Activated B cell treated with CpG ODN at 0.5 μM for 24 hours (primary cell): ENCODE measurements at regions of chr7 and their contacts with region 1.

Region 1: DNA sequence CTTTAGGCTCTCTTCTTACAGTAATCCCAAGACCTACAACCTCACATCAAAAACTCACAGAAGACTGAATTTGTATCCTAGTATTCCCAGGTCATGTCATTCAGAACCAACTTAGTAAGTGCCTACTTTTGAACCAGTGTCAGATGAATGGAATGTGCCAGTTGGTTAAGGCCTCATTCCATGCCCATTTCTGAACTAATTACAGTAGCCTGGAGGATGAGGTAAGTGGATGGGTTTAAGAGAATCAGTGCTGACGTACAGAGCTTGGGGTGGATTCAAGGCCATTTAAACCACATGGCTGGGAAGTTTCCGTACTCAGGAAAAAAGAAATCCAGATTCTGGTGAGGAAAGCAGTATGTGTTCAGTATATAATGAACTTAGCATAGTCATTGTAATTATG is 21.9 kb upstream of the FOXP2 start:
- DNase-seq: no peak
- ATAC-seq: no peak
- H3K4me3 Mint-ChIP-seq: no peak overlapping the region
- H3K27ac Mint-ChIP-seq: no peak overlapping the region
- H3K4me1 Mint-ChIP-seq: no peaks in the 10 kb centered on the region
- H3K27me3 Mint-ChIP-seq: no peaks in the 10 kb centered on the region
- CTCF ChIP-seq: no peak

Region 2: DNA sequence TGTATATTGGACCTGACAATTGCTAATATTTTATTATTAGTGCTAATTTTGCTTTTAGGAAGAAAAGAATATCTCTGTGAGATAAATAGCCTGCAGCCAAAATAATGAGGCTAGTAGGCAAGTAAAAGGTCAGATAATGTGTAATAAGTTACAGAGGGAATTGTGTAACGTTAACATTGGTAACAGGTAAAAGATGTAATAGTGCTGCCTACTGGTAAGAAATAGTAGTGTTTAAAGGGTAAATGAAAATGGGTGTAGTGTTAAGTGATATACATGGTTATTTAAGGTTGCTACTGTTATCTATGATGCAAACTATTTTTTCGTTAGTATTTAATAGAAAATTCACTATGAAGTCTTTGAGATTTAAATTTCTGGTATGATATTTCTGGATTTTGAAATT is 12.7 kb after region 1 on chr7:
- CTCF ChIA-PET with region 1: no interaction called
- POLR2A ChIA-PET with region 1: no interaction called
- intact Hi-C with region 1: loop called (anchors 2 kb)
- DNase-seq: no peak
- ATAC-seq: no peak
- H3K4me3 Mint-ChIP-seq: no peak overlapping the region
- H3K27ac Mint-ChIP-seq: no peak overlapping the region
- H3K4me1 Mint-ChIP-seq: no peaks in the 10 kb centered on the region
- H3K27me3 Mint-ChIP-seq: no peaks in the 10 kb centered on the region
- CTCF ChIP-seq: no peak